Activated CD4-positive, alpha-beta T cell treated with anti-CD3 and anti-CD28 coated beads for 36 hours (primary cell): ENCODE measurements at regions of chr10 and their contacts with region 1.

Region 1: DNA sequence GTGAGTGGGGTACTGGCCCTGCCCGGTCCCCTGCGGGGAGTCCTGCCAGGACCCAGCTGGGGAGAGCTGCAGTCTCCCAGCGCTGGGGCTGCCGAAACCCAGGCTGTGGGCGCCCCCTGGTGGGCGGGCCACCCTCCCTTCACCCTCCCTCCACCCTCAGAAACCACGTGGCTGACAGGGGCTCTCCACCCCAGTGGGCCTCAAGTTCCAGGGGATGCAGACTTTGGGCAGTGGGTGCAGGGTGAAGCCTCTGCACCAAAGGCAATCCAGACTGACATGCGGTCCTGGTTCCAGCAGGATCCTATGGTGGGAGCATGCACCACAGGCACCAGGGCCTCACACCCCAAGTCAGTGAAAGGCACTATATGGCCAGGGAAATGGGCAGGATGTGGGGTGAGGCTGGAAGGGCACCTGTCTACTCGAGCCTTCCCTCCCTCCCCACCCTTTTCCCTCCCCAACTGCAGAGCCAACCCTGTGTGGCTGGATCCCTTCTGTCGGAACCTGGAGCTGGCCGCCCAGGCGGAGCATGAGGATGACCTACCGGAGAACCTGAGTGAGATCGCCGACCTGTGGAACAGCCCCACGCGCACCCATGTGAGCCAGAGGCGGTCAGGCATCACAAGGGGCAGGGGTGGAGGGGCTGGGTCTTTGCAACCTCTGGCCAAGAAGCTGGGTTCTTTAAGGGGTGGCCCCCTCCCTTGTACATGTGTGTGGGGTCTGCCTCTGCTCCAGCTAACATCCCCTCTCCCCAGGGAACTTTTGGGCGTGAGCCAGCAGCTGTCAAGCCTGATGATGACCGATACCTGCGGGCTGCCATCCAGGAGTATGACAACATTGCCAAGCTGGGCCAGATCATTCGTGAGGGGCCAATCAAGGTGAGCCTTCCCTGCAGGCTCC is 38.8 kb downstream of the PSAP start:
- DNase-seq: peak; percentile 88
- ATAC-seq: peak; percentile 98
- H3K4me3 Mint-ChIP-seq: no peak overlapping the region
- H3K27ac Mint-ChIP-seq: no peak overlapping the region
- H3K4me1 Mint-ChIP-seq: peaks cover 2% of the 10 kb centered on the region
- H3K27me3 Mint-ChIP-seq: no peaks in the 10 kb centered on the region

Region 2: DNA sequence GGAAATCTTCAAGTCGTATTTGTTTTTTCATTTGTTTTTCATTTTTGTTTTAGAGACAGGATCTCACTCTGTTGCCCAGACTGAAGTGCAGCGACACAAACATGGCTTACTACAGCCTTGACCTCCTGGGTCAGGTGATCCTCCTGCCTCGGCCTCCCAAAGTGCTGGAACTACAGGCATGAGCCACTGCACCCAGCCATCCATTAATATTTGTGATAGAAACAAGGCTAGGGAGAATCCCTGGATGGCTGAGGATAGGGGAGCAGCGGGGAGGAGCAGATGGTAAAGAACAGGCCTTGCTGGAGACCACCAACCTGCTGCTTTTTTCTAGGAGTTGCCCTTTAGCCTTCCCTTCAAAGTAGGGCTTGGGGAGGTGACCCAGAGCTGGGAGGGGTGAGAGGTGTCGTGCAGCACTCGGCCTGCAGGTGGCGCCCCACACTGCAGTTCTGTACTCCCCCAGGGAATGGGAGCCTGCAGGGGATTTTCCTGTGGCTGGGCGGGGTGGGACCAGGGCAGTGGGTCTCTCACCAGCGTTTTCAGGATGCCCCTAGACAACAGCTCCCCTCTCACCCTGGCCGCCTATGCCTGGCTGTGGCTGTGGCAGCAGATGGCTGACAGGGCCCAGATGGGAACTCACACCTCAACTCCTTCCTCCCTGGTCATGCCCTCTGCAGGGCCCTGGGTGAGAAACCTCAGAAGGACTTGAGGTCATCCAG is 428.1 kb before region 1 on chr10:
- CTCF ChIA-PET with region 1: no interaction called
- POLR2A ChIA-PET with region 1: no interaction called
- intact Hi-C with region 1: loop called (anchors 1 to 5 kb)
- DNase-seq: peak; percentile 87
- ATAC-seq: peak; percentile 95
- H3K4me3 Mint-ChIP-seq: no peak overlapping the region
- H3K27ac Mint-ChIP-seq: no peak overlapping the region
- H3K4me1 Mint-ChIP-seq: no peaks in the 10 kb centered on the region
- H3K27me3 Mint-ChIP-seq: no peaks in the 10 kb centered on the region

Region 3: GRCh38 chr10:71486484-71487114 is 325.7 kb before region 1 on chr10:
- CTCF ChIA-PET with region 1: no interaction called
- POLR2A ChIA-PET with region 1: no interaction called
- intact Hi-C with region 1: loop called in 1 of 2 experiments (anchors 1 kb)
- DNase-seq: peak; percentile 81
- ATAC-seq: peak; percentile 64
- H3K4me3 Mint-ChIP-seq: no peak overlapping the region
- H3K27ac Mint-ChIP-seq: no peak overlapping the region
- H3K4me1 Mint-ChIP-seq: no peaks in the 10 kb centered on the region
- H3K27me3 Mint-ChIP-seq: peaks cover 4% of the 10 kb centered on the region

Region 4: GRCh38 chr10:71713135-71714030 is 98.9 kb before region 1 on chr10:
- CTCF ChIA-PET with region 1: interaction called, 8 read pairs
- POLR2A ChIA-PET with region 1: no interaction called
- intact Hi-C with region 1: loop called (anchors 5 kb)
- DNase-seq: peak; percentile 49
- ATAC-seq: peak; percentile 50
- H3K4me3 Mint-ChIP-seq: peak overlapping the region; percentile 61
- H3K27ac Mint-ChIP-seq: peak overlapping the region; percentile 98
- H3K4me1 Mint-ChIP-seq: peaks cover 46% of the 10 kb centered on the region
- H3K27me3 Mint-ChIP-seq: no peaks in the 10 kb centered on the region